B cell (primary cell): ENCODE measurements at regions of chr11 and their contacts with region 1.

Region 1: DNA sequence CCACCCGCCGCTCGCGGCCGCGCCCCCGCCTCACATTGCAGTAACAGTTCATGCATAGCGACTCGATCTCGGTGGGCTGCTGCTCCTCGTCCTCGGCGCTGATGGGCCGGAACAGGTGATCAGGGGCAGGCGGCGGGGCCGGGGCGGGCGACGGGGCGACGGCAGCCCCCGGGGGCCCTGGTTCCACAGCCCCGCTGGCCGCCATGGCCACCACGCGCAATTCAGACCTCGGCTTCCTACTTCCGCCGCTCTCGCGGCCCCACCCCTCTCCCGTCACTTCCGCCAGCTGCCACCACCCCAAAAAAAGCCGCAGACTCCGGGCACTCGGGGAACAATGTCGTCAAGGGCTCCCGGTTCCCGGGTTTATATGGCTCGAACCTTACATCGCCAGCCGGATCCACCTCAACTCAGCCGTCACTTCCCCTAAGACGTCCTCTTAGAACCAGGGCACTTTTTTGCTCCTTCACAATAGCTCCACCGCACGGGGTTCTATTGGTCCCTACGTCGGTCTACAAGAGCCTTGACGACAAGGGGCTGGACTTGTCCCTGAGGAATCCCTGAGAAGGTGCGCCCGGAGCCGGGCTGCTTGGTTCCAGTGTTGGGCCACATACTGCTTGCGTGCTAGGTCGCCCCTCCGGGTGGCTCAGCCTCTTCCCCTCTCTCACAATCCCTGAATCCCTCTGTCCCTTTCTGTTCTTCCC is at the start of gene ZPR1:
- DNase-seq: peak; percentile 88
- ATAC-seq: peak; percentile 83
- H3K4me3 ChIP-seq: peak within 1 kb of the TSS; percentile 69 to 88 (median 81)
- H3K4me3 Mint-ChIP-seq: peak within 1 kb of the TSS; percentile 98
- H3K27ac ChIP-seq: peak within 1 kb of the TSS; percentile 47 to 82
- H3K27ac Mint-ChIP-seq: peak within 1 kb of the TSS; percentile 98
- H3K4me1 ChIP-seq: peaks cover 22 to 29% of the 10 kb centered on the region in 2 donors
- H3K4me1 Mint-ChIP-seq: peaks cover 37% of the 10 kb centered on the region
- H3K27me3 ChIP-seq: peaks cover 0 to 10% (median 0%) of the 10 kb centered on the region in 4 experiments
- H3K27me3 Mint-ChIP-seq: peaks cover 7% of the 10 kb centered on the region
- CTCF ChIP-seq: no peak
- total RNA-seq, gene ZPR1: 63.1 and 63.7 TPM in 2 replicates

Region 2: GRCh38 chr11:116772443-116773202 is 15.3 kb before region 1 on chr11 and contains the start of gene BUD13:
- CTCF ChIA-PET with region 1: interaction called, 10 read pairs
- POLR2A ChIA-PET with region 1: interaction called, 11 read pairs
- intact Hi-C with region 1: loop called (anchors 1 kb)
- DNase-seq: peak; percentile 96
- ATAC-seq: peak; percentile 89
- H3K4me3 ChIP-seq: peak within 1 kb of the TSS; percentile 71 to 99 (median 95)
- H3K4me3 Mint-ChIP-seq: peak within 1 kb of the TSS; percentile 93
- H3K27ac ChIP-seq: peak within 1 kb of the TSS; percentile 85 to 96
- H3K27ac Mint-ChIP-seq: peak within 1 kb of the TSS; percentile 93
- H3K4me1 ChIP-seq: peaks cover 23 to 28% of the 10 kb centered on the region in 2 donors
- H3K4me1 Mint-ChIP-seq: peaks cover 34% of the 10 kb centered on the region
- H3K27me3 ChIP-seq: no peaks in the 10 kb centered on the region
- H3K27me3 Mint-ChIP-seq: no peaks in the 10 kb centered on the region
- CTCF ChIP-seq: no peak
- total RNA-seq, gene BUD13: 24.2 and 24.8 TPM in 2 replicates

Region 3: GRCh38 chr11:116835791-116836631 is 48.1 kb after region 1 on chr11:
- CTCF ChIA-PET with region 1: interaction called, 45 read pairs
- POLR2A ChIA-PET with region 1: interaction called, 3 read pairs
- intact Hi-C with region 1: loop called (anchors 1 kb)
- DNase-seq: peak; percentile 84
- ATAC-seq: peak; percentile 91
- H3K4me3 ChIP-seq: peak overlapping the region in 4 of 5 experiments; percentile 38 to 61 (median 46)
- H3K4me3 Mint-ChIP-seq: peak overlapping the region; percentile 83
- H3K27ac ChIP-seq: no peak overlapping the region
- H3K27ac Mint-ChIP-seq: no peak overlapping the region
- H3K4me1 ChIP-seq: peaks cover 7 to 14% of the 10 kb centered on the region in 2 donors
- H3K4me1 Mint-ChIP-seq: peaks cover 16% of the 10 kb centered on the region
- H3K27me3 ChIP-seq: peaks cover 0 to 4% (median 0%) of the 10 kb centered on the region in 4 experiments
- H3K27me3 Mint-ChIP-seq: peaks cover 4% of the 10 kb centered on the region
- CTCF ChIP-seq: peak; percentile 44

Region 4: DNA sequence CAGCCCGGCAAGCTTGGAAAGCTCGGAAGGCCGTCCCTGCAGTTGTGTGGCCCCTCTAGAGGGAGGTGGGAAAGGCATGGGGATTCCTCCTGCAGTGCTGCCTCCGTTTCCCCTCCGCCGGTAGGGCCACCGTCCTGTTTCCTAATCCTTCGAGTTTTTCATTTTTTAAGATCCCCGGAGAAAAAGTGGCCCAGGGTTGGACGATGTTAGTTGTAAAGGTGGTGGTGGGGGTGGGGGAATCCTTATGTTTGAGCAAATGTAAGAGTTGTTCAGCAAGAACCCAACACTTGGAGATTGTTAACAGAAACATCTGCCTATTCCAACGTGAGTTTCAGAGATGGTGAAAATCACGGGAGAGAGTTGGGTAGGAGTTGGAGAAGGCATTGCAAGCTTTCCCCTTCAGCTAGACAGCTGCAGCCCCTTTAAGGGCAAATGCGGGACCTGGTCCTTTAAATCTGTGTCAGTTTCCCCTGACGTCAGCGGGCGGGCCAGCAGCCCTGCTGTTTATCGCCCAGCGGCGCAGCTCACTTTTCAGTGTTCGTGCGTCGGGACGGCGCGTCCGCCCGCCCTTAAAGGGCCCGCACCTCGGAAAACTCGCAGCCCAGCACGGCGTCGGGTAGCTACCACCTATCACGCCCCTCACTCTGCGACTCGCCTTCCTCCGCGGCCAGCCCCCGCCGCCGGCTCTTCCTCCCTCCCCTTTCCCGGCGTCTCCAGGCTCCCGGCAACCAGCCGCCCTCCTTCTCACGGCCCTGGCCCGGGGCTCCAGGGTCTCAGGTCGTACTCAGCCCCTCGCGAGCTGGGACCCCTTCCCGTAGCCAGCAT is 390.5 kb after region 1 on chr11 and contains the start of gene SIDT2:
- CTCF ChIA-PET with region 1: interaction called, 4 read pairs
- POLR2A ChIA-PET with region 1: no interaction called
- intact Hi-C with region 1: loop called (anchors 1 kb)
- DNase-seq: peak; percentile 92
- ATAC-seq: peak; percentile 88
- H3K4me3 ChIP-seq: peak within 1 kb of the TSS; percentile 68 to 85 (median 81)
- H3K4me3 Mint-ChIP-seq: peak within 1 kb of the TSS; percentile 99
- H3K27ac ChIP-seq: peak within 1 kb of the TSS; percentile 84
- H3K27ac Mint-ChIP-seq: peak within 1 kb of the TSS; percentile 96
- H3K4me1 ChIP-seq: peaks cover 27 to 39% of the 10 kb centered on the region in 2 donors
- H3K4me1 Mint-ChIP-seq: peaks cover 36% of the 10 kb centered on the region
- H3K27me3 ChIP-seq: no peaks in the 10 kb centered on the region
- H3K27me3 Mint-ChIP-seq: no peaks in the 10 kb centered on the region
- CTCF ChIP-seq: no peak
- total RNA-seq, gene SIDT2: 241 and 245 TPM in 2 replicates

Region 5: DNA sequence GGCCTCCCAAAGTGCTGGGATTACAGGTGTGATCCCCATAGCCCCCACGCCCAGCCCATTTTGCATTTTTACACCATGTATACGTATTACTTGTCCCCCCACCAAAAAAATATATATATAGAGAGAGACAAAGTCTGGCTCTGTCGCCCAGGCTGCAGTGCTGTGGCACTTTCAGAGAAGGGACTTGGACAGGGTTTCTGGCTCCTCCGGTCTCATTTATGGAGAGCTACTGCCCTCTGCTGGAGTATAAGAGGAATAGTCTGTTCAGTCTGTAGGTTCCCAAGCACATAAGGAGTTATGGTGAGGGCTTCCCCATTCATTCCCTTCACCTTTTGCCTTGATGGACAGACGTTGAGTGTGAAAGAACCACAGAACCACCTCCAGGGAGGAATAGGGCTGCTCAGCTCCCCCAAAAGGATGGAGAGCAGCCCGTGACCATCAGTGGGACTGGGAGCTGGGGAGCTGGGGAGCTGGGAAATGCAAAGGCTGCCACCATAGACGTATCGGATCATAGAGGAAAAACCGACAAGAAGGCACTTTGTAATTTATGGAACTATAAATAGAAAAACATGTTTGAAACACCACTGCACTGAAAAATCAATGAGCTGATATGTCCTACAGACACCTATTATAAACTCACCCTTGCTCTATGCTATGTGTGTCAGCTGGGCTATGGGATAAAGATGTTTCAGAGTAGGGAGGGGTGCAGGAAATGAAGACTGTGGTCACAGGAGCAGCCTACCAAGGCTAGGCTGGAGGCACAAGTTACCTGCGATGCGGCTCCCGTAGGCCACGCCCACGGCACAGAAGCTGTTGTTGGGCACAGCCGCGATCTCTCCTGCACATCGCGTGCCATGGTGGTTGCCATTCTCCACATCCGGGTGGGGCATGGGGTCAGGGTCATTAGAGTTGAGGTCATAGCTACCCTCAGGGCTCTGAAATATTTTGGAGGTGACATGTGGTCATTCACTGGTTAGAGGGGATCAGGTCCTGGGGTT is 438.8 kb after region 1 on chr11:
- CTCF ChIA-PET with region 1: interaction called, 31 read pairs
- POLR2A ChIA-PET with region 1: no interaction called
- intact Hi-C with region 1: no loop called
- DNase-seq: peak; percentile 86
- ATAC-seq: peak; percentile 70
- H3K4me3 ChIP-seq: no peak overlapping the region
- H3K4me3 Mint-ChIP-seq: no peak overlapping the region
- H3K27ac ChIP-seq: no peak overlapping the region
- H3K27ac Mint-ChIP-seq: peak overlapping the region; percentile 74
- H3K4me1 ChIP-seq: peaks cover 26 to 37% of the 10 kb centered on the region in 2 donors
- H3K4me1 Mint-ChIP-seq: peaks cover 35% of the 10 kb centered on the region
- H3K27me3 ChIP-seq: no peaks in the 10 kb centered on the region
- H3K27me3 Mint-ChIP-seq: no peaks in the 10 kb centered on the region
- CTCF ChIP-seq: peak; percentile 84

Region 6: GRCh38 chr11:117232092-117232878 is 444.3 kb after region 1 on chr11 and contains the start of gene RNF214:
- CTCF ChIA-PET with region 1: interaction called, 31 read pairs
- POLR2A ChIA-PET with region 1: no interaction called
- intact Hi-C with region 1: loop called (anchors 1 kb)
- DNase-seq: peak; percentile 89
- ATAC-seq: peak; percentile 78
- H3K4me3 ChIP-seq: peak within 1 kb of the TSS; percentile 64 to 99 (median 91)
- H3K4me3 Mint-ChIP-seq: peak within 1 kb of the TSS; percentile 95
- H3K27ac ChIP-seq: peak within 1 kb of the TSS; percentile 82 to 84
- H3K27ac Mint-ChIP-seq: peak within 1 kb of the TSS; percentile 99
- H3K4me1 ChIP-seq: peaks cover 34 to 38% of the 10 kb centered on the region in 2 donors
- H3K4me1 Mint-ChIP-seq: peaks cover 48% of the 10 kb centered on the region
- H3K27me3 ChIP-seq: no peaks in the 10 kb centered on the region
- H3K27me3 Mint-ChIP-seq: no peaks in the 10 kb centered on the region
- CTCF ChIP-seq: peak; percentile 83
- total RNA-seq, gene RNF214: 33.6 and 36.1 TPM in 2 replicates

Region 7: DNA sequence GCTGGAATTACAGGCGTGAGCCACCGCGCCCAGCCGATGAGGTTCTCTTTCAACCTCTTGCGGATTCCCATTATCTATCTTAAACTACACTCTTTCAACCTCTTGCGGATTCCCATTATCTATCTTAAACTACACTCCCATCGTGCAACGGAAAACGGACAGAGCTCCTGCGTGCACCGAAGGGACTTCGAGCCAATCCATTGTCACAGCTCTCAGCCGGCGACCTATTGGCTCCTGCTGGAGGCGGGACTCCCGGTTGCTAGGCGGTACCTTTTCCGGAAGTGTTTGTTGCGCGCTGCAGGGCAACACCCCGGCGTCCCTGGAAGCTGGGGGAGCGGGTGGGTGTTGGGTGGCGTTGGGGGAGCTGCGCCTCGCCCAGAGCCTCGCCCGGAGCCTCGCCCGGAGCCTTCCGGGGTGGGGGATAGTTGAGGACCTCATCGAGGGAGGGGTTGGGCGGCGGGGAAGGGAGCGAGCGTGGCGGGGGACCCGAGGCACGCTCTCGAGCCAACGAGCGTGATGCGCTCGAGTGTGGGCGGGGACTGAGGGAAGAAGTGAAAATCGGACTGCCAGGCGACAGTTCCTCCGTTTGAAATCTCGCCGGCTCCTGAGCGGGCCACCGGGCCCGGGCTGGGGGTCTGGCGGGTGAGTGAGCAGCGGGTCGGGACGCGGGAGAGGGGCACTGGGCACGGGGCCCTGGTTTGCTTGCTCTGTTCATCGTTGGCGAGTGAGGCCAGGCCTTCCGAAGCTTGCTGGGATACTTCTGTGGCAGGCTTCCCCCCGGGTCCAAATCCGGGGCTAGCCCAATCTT is 539.8 kb after region 1 on chr11 and contains the start of gene CEP164:
- CTCF ChIA-PET with region 1: no interaction called
- POLR2A ChIA-PET with region 1: no interaction called
- intact Hi-C with region 1: loop called (anchors 5 kb)
- DNase-seq: peak; percentile 97
- ATAC-seq: peak; percentile 92
- H3K4me3 ChIP-seq: peak within 1 kb of the TSS; percentile 57 to 88 (median 79)
- H3K4me3 Mint-ChIP-seq: peak within 1 kb of the TSS; percentile 71
- H3K27ac ChIP-seq: peak within 1 kb of the TSS; percentile 84 to 89
- H3K27ac Mint-ChIP-seq: peak within 1 kb of the TSS; percentile 65
- H3K4me1 ChIP-seq: peaks cover 6 to 11% of the 10 kb centered on the region in 2 donors
- H3K4me1 Mint-ChIP-seq: peaks cover 8% of the 10 kb centered on the region
- H3K27me3 ChIP-seq: no peaks in the 10 kb centered on the region
- H3K27me3 Mint-ChIP-seq: no peaks in the 10 kb centered on the region
- CTCF ChIP-seq: no peak
- total RNA-seq, gene CEP164: 48.7 and 54.8 TPM in 2 replicates